ENCODE measurements at regions of chr9 and their contacts with region 1.

Region 1: DNA sequence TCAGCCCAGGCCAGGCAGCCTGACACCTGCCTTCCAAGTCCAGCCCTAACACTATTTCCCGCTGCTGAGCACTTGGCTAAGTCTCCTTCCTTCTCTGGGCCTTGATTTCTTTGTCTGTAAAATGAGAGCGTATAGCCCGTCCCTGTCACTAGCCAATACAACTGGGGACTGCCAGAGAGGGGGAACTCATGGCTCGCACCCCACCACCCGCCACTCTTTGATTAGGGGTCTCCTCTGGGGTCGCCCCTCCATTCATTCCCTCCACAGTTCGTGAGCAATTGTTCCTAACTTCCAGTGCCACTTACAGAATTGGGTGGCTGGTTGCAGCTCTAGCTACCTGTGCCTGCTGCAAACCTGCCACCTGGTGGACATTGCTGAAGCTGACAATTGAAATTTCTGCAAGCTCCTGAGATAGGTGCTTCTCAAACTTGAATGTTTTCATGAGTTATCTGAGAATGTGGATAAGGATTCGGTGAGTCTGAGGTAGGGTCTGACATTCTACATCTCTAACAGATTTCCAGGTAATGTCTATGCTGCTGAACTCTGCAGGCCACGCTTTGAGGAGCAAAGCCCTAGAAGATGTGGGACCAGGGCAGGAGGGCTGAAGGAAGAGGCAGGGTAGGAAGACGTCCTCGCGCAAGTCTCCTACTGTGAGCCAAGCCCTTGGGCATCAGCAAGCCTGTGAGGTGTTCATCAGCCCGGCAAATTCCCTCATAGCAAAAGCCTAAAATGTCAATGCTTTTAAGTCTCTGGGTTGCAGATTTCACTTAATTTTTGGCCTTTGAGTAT is 13.3 kb upstream of the RECK start:
- DNase-seq: peak; percentile 61
- ATAC-seq: peak; percentile 47 to 65

Region 2: GRCh38 chr9:35903049-35903448 is 120.4 kb before region 1 on chr9:
- intact Hi-C with region 1: loop called in 1 of 2 experiments (anchors 5 kb)
- DNase-seq: no peak
- ATAC-seq: no peak

Region 3: DNA sequence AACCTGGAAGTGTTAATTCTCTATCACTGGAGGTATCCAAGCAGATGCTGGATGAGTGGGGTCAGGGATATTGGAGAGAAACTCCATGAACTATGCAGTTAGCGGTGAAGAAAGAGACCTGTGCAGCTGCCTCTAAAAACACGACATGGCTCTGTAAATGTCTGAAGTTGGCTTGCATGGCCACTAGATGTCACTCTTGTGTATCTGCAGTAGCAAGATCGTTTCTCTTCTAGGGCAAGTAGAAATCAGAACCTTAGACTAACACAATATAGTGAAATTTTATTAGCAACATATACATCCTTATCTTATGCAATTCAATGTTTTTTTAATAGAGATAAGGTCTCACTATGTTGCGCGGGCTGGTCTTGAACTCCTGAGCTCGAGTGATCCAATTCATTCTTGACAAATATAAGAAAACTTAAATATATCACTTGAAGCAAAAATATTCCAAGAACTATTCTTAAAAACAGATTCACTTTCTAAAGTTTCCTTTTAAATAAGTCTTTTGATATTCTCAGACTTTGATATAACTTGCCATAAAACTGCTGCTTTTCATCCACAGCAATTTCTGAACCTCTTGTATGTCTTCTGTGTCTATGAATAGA is 68.4 kb before region 1 on chr9:
- intact Hi-C with region 1: loop called (anchors 1 to 2 kb)
- DNase-seq: peak; percentile 53
- ATAC-seq: peak; percentile 73 to 82

Measured in left cardiac atrium (tissue), 4 donors.